ENCODE measurements at regions of chr1 and their contacts with region 1.

Region 1: GRCh38 chr1:246012341-246012740 is 494.7 kb downstream of the SMYD3 start:
- DNase-seq: no peak
- ATAC-seq: peak; percentile 51

Region 2: GRCh38 chr1:245148861-245149260 is 863.5 kb before region 1 on chr1:
- intact Hi-C with region 1: loop called in 1 of 2 experiments (anchors 5 kb)
- DNase-seq: no peak
- ATAC-seq: no peak

Region 3: DNA sequence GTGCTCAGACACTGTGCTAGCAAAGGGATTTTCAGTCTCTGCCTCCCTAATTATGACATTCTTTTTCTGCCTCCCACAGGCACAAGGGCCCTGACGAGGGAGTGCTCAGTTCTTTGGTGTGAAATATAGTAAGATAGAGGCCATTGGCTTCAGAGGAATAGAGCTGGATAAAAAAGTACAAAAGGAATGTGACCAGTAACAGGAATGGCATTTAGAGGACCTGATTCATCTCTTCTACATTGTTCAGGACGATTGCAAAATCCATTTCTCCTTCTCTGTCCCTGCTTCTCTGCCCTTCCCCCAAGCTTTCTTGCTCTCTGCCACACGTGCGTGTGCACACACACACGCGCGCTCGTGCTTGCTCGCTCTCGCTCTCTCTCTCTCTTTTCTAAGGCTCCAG is 189.4 kb before region 1 on chr1:
- intact Hi-C with region 1: no loop called
- DNase-seq: no peak
- ATAC-seq: no peak

Region 4: GRCh38 chr1:246471688-246472087 is 459.3 kb after region 1 on chr1:
- intact Hi-C with region 1: no loop called
- DNase-seq: no peak
- ATAC-seq: no peak

Region 5: DNA sequence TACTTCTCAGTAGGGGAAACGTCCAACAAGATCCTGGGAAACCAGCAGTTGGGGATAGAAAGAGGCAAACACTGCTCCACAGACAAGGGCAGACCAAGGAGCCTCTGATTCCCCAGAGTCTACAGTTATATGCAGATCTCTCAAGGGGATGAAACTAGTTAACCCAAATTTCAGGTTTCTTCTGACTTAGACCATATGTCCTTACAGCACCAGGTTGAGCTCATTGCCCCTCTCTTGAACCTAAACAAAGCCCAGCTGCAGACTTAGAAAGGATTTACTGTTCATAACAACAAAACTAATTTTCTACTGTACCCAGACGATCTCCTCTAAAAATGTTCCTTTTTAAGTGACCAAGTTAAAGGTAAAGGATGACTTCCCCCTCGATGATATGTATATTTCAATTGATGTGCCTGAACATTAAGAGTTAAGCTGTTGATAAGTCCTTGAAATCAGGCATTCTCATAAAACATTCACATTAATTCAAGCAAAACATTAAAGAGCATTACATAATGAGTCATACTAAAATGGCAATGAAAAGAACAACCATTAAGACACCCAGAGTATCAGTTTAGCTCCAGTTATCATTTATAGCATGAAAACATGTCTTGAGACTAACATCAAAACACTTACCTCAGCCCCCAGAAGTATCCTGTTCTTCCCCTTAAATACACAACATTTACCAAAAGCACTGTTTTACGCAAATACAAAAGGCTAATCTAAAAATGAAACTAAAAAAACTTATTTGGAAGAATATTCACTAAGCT is 470.6 kb after region 1 on chr1:
- intact Hi-C with region 1: loop called in 1 of 2 experiments (anchors 10 kb)
- DNase-seq: no peak
- ATAC-seq: no peak

Measured in left colon (tissue), 2 donors.